ENCODE measurements at regions of chr20 and their contacts with region 1.

Region 1: DNA sequence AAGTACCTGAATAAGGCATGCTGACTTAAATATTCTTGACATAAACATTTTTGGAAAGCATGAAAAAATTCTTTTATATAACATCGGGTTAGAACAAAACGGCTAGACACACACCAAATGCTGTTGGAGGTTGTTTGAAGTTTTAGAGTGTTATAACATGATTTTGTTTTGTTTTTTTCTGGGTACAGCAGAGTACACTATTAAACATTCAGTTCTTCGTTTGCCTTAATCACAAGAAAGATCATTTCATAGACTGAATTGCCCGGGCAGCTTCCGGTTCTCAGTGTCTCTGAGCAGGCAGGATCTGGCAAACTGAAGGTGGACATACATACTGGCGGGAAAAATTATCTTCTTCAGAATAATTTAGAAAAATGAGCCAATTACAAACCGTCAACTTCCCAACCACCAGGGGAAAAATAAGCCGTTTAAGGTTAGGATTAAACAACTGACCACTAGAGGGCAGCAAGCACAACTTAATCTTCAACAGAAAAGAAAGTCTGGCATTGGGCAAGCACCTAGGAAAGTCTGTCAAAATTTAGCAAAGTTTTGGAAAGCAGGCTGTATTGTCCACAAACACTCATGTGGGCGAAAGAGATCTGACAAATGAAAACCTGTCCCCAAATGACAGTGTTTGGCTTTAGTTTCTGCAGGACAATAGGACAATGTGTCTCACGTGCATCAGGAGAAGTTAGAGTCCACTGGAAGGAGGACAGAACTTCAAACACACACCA is 15.0 kb downstream of the ZNF217 start:
- DNase-seq: peak; percentile 78 to 83 (median 83)
- H3K4me3 ChIP-seq: peak overlapping the region; percentile 45 to 79
- H3K4me3 Mint-ChIP-seq: peak overlapping the region; percentile 85 to 95 (median 90)
- H3K27ac ChIP-seq: peak overlapping the region; percentile 68
- H3K27ac Mint-ChIP-seq: peak overlapping the region; percentile 94 to 100 (median 95)
- H3K4me1 ChIP-seq: peaks cover 97% of the 10 kb centered on the region
- H3K4me1 Mint-ChIP-seq: peaks cover 57 to 95% (median 75%) of the 10 kb centered on the region in 4 donors
- H3K27me3 ChIP-seq: no peaks in the 10 kb centered on the region
- H3K27me3 Mint-ChIP-seq: no peaks in the 10 kb centered on the region

Region 2: GRCh38 chr20:53100476-53100911 is 478.2 kb before region 1 on chr20:
- CTCF ChIA-PET with region 1: no interaction called
- POLR2A ChIA-PET with region 1: no interaction called
- intact Hi-C with region 1: no loop called
- DNase-seq: no peak
- H3K4me3 ChIP-seq: no peak overlapping the region
- H3K4me3 Mint-ChIP-seq: no peak overlapping the region
- H3K27ac ChIP-seq: no peak overlapping the region
- H3K27ac Mint-ChIP-seq: no peak overlapping the region
- H3K4me1 ChIP-seq: no peaks in the 10 kb centered on the region
- H3K4me1 Mint-ChIP-seq: peaks cover 0 to 4% (median 0%) of the 10 kb centered on the region in 4 donors
- H3K27me3 ChIP-seq: no peaks in the 10 kb centered on the region
- H3K27me3 Mint-ChIP-seq: no peaks in the 10 kb centered on the region

Region 3: DNA sequence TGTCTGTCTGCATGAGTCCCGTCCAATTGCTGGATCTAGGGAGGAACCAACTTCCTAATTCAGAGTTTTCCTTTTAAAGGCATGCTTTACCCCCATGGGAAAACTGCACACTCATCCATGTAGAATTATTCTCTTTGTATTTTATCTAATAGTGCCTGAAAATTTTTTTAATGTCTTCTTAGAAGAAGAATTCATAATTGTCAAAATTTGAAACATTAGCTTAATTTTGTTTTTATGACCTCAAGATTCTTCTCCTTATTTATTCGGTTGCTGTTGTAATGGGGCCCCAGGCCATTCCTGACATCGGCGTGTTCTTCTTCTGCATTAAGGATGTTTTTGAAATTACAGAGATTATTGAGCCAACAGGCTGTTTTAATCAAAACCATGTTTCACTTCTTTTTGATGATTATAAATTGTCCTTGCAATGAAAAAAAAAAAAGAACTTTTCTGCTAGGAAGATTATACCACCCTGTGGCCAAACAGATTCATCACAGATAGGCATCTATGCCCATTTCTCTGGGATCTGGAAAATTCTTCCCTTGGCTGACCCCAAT is 85.3 kb before region 1 on chr20:
- CTCF ChIA-PET with region 1: no interaction called
- POLR2A ChIA-PET with region 1: no interaction called
- intact Hi-C with region 1: no loop called
- DNase-seq: no peak
- H3K4me3 ChIP-seq: no peak overlapping the region
- H3K4me3 Mint-ChIP-seq: no peak overlapping the region
- H3K27ac ChIP-seq: no peak overlapping the region
- H3K27ac Mint-ChIP-seq: no peak overlapping the region
- H3K4me1 ChIP-seq: no peaks in the 10 kb centered on the region
- H3K4me1 Mint-ChIP-seq: no peaks in the 10 kb centered on the region
- H3K27me3 ChIP-seq: no peaks in the 10 kb centered on the region
- H3K27me3 Mint-ChIP-seq: peaks cover 1 to 8% of the 10 kb centered on the region in 2 donors

Region 4: DNA sequence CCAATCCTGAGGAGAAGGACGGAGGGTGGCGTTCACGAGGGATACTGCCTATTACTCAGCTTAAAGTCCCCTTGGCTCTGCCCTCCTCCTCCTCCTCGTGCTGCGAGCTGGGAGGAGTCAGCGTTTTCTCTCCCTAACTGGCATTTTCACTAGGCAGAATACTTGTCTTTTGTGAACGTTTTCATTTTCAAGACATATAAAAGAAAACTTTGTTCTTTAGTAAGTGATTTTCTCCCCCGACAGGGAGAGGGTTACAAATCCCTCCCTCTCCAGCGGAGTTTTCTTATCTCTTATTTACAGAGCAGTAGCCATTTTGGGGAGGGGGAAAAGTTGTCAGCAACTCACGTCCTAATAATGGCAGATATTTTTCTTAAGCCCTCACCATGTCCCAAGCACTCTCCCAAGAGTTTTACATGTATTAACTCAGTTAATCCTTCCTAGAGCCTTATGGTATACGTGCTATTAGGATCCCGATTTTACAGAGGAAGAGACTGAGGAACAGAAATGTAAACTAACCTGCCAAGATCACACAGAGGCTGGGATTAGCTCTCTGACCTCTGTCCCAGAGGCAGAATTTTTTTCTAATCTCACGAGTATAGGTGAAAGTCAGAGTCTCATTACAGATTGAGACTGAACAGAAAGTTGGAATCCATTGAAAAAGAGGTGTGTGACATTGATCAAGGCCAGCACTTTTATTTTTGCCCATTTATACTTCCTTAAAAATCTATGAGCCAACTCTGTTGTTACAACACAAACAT is 45.0 kb after region 1 on chr20:
- CTCF ChIA-PET with region 1: interaction called, 4 read pairs
- POLR2A ChIA-PET with region 1: interaction called, 14 read pairs
- intact Hi-C with region 1: loop called (anchors 5 kb)
- DNase-seq: peak; percentile 29 to 47 (median 31)
- H3K4me3 ChIP-seq: peak overlapping the region; percentile 43 to 67
- H3K4me3 Mint-ChIP-seq: peak overlapping the region; percentile 82 to 90 (median 88)
- H3K27ac ChIP-seq: peak overlapping the region; percentile 58
- H3K27ac Mint-ChIP-seq: peak overlapping the region; percentile 88 to 97 (median 95)
- H3K4me1 ChIP-seq: peaks cover 37% of the 10 kb centered on the region
- H3K4me1 Mint-ChIP-seq: peaks cover 29 to 38% (median 35%) of the 10 kb centered on the region in 4 donors
- H3K27me3 ChIP-seq: no peaks in the 10 kb centered on the region
- H3K27me3 Mint-ChIP-seq: no peaks in the 10 kb centered on the region

Region 5: DNA sequence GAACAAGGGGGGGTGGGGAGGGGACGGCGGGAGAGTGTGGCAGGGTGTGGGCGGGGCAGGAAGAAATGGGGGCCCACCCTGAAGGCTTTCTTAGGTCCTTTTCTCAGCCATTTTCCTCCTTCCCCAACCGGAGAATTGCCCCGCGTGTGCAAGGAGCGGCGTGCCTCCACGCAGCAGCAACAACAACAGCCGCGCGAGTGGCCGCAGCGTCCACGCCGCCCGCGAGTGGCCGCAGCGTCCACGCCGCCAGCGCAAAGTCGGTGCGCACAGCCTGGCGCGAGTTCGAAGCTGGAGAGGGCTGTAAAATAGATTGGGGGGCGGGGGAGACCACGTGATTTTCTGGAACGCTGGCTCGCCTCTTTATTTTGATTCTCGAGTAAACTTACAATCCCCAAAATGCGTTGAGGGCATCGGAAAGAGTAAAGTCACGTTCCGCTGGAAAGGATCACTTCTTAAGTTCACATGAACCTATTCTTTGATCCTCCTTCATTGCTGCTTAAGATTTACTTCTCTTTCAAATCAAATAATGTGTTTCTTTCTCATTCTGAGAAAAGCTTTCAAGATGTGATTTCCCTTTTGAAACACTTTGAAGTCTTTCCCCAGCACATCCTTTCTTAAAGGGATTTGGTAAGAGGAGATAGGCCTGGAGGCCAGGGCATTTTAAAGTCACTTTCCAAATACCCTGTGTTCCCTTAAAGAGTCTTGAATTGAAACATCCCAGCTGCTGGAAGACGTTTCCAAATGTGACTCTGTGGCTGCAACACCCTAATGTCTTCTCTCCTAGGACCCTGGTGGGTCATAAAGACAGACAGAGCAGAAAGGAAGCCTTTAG is 81.6 kb after region 1 on chr20:
- CTCF ChIA-PET with region 1: interaction called, 7 read pairs
- POLR2A ChIA-PET with region 1: interaction called, 15 read pairs
- intact Hi-C with region 1: no loop called
- DNase-seq: peak in 2 of 5 donors; percentile 16 to 18
- H3K4me3 ChIP-seq: peak overlapping the region; percentile 56 to 66
- H3K4me3 Mint-ChIP-seq: peak overlapping the region; percentile 77 to 91 (median 88)
- H3K27ac ChIP-seq: peak overlapping the region; percentile 41
- H3K27ac Mint-ChIP-seq: peak overlapping the region; percentile 63 to 93 (median 89)
- H3K4me1 ChIP-seq: peaks cover 46% of the 10 kb centered on the region
- H3K4me1 Mint-ChIP-seq: peaks cover 36 to 70% (median 50%) of the 10 kb centered on the region in 4 donors
- H3K27me3 ChIP-seq: no peaks in the 10 kb centered on the region
- H3K27me3 Mint-ChIP-seq: no peaks in the 10 kb centered on the region

Region 6: GRCh38 chr20:53750827-53751619 is 172.4 kb after region 1 on chr20:
- CTCF ChIA-PET with region 1: interaction called, 3 read pairs
- POLR2A ChIA-PET with region 1: interaction called, 17 read pairs
- intact Hi-C with region 1: loop called (anchors 1 kb)
- DNase-seq: peak in 4 of 5 donors; percentile 28 to 54 (median 40)
- H3K4me3 ChIP-seq: no peak overlapping the region
- H3K4me3 Mint-ChIP-seq: peak overlapping the region in 7 of 8 donors; percentile 52 to 82 (median 76)
- H3K27ac ChIP-seq: peak overlapping the region; percentile 55
- H3K27ac Mint-ChIP-seq: peak overlapping the region; percentile 86 to 98 (median 95)
- H3K4me1 ChIP-seq: peaks cover 63% of the 10 kb centered on the region
- H3K4me1 Mint-ChIP-seq: peaks cover 48 to 72% (median 63%) of the 10 kb centered on the region in 4 donors
- H3K27me3 ChIP-seq: no peaks in the 10 kb centered on the region
- H3K27me3 Mint-ChIP-seq: no peaks in the 10 kb centered on the region

Region 7: GRCh38 chr20:53899351-53900167 is 320.9 kb after region 1 on chr20:
- CTCF ChIA-PET with region 1: interaction called, 3 read pairs
- POLR2A ChIA-PET with region 1: interaction called, 13 read pairs
- intact Hi-C with region 1: no loop called
- DNase-seq: peak; percentile 64 to 81 (median 68)
- H3K4me3 ChIP-seq: no peak overlapping the region
- H3K4me3 Mint-ChIP-seq: peak overlapping the region in 5 of 8 donors; percentile 3 to 56 (median 47)
- H3K27ac ChIP-seq: peak overlapping the region; percentile 6
- H3K27ac Mint-ChIP-seq: peak overlapping the region; percentile 65 to 88 (median 85)
- H3K4me1 ChIP-seq: peaks cover 17% of the 10 kb centered on the region
- H3K4me1 Mint-ChIP-seq: peaks cover 12 to 31% (median 24%) of the 10 kb centered on the region in 4 donors
- H3K27me3 ChIP-seq: no peaks in the 10 kb centered on the region
- H3K27me3 Mint-ChIP-seq: no peaks in the 10 kb centered on the region

Region 8: DNA sequence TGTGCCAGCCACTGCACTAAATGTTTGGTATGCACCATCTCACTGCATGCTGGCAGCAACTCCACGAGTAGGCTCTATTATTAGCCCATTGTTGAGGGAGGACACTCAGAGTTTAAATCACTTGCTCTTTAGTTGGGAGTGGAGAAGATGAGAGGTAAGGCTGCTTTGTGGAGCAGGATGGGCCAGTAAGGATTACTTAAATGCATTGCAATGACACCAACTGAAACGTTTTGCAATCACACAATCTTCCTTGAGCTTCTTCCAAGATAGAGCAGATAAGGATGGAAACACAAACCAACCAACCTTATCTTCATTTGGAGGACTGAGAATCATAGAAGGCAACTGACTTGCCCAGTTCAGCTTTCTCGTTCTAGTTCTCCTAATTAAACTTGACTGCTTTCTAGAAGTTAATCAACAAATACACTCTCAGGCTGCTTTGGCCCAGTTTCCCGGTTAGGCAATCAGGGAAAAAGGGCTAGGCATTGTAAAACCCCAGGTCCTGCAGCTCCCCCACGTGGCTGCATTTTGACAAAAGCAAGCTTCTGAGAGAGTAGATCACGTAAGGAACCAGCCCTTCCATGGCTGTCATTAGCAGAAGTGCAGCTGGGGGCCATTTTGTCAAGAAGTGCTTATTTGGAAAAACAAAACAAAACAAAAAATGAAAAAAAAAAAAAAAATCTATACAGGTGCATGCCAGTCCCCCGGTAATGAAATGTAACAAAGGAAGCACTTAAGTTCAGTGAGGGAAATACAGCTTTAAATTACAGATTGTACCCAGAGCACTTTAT is 361.1 kb after region 1 on chr20:
- CTCF ChIA-PET with region 1: interaction called, 50 read pairs
- POLR2A ChIA-PET with region 1: interaction called, 15 read pairs
- intact Hi-C with region 1: loop called (anchors 1 kb)
- DNase-seq: peak; percentile 50 to 60 (median 52)
- H3K4me3 ChIP-seq: no peak overlapping the region
- H3K4me3 Mint-ChIP-seq: no peak overlapping the region
- H3K27ac ChIP-seq: no peak overlapping the region
- H3K27ac Mint-ChIP-seq: peak overlapping the region in 3 of 7 donors; percentile 3 to 77 (median 18)
- H3K4me1 ChIP-seq: peaks cover 21% of the 10 kb centered on the region
- H3K4me1 Mint-ChIP-seq: peaks cover 14 to 43% (median 24%) of the 10 kb centered on the region in 4 donors
- H3K27me3 ChIP-seq: no peaks in the 10 kb centered on the region
- H3K27me3 Mint-ChIP-seq: no peaks in the 10 kb centered on the region